Uterus (tissue), 4 donors: ENCODE measurements at regions of chr12 and their contacts with region 1.

Region 1: GRCh38 chr12:121668750-121669520 is 519 bp downstream of the MORN3 start:
- DNase-seq: no peak
- H3K4me3 ChIP-seq: no peak overlapping the region
- H3K27ac ChIP-seq: no peak overlapping the region
- H3K4me1 ChIP-seq: no peaks in the 10 kb centered on the region
- H3K27me3 ChIP-seq: no peaks in the 10 kb centered on the region
- CTCF ChIP-seq: peak; percentile 37 to 42 (median 40)
- POLR2A ChIP-seq: no peak

Region 2: DNA sequence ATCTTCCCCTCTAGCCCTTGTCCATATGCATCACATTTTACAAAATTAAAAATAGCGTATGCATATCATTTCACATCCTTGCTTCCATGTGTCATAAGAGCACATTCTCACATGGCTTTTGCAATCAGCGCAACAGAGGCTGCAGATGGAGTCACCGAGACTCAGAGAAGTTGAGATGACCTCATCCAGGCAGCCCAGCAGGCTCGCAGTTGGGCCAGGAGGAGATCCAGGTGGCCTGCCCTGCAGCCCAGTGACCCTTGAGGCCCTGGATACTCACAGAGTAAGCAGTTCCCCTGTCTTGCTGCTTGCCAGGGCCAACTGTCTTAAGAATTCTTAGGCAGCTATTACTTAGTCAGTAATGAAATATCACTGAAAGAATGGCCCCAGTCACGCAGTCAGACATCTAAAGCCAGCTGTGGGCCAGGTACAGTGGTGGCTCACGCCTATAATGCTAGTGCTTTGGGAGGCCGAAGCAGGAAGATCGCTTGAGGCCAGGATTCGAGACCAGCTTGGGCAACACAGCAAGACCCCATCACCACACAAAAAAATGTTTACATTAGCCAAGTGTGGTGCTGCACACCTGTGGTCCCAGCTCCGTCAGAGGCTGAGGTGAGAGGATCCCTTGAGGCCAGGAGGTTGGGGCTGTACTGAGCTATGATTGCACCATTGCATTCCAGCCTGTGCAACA is 381.5 kb before region 1 on chr12:
- intact Hi-C with region 1: no loop called
- DNase-seq: no peak
- H3K4me3 ChIP-seq: no peak overlapping the region
- H3K27ac ChIP-seq: no peak overlapping the region
- H3K4me1 ChIP-seq: peaks cover 0 to 8% of the 10 kb centered on the region in 2 donors
- H3K27me3 ChIP-seq: no peaks in the 10 kb centered on the region
- CTCF ChIP-seq: no peak
- POLR2A ChIP-seq: no peak

Region 3: GRCh38 chr12:121499929-121500793 is 168.8 kb before region 1 on chr12:
- intact Hi-C with region 1: loop called (anchors 10 kb)
- DNase-seq: peak; percentile 79 to 80
- H3K4me3 ChIP-seq: peak overlapping the region; percentile 4 to 5
- H3K27ac ChIP-seq: peak overlapping the region; percentile 55 to 61
- H3K4me1 ChIP-seq: peaks cover 0 to 5% of the 10 kb centered on the region in 2 donors
- H3K27me3 ChIP-seq: no peaks in the 10 kb centered on the region
- CTCF ChIP-seq: peak; percentile 79 to 97 (median 90)
- POLR2A ChIP-seq: no peak

Region 4: DNA sequence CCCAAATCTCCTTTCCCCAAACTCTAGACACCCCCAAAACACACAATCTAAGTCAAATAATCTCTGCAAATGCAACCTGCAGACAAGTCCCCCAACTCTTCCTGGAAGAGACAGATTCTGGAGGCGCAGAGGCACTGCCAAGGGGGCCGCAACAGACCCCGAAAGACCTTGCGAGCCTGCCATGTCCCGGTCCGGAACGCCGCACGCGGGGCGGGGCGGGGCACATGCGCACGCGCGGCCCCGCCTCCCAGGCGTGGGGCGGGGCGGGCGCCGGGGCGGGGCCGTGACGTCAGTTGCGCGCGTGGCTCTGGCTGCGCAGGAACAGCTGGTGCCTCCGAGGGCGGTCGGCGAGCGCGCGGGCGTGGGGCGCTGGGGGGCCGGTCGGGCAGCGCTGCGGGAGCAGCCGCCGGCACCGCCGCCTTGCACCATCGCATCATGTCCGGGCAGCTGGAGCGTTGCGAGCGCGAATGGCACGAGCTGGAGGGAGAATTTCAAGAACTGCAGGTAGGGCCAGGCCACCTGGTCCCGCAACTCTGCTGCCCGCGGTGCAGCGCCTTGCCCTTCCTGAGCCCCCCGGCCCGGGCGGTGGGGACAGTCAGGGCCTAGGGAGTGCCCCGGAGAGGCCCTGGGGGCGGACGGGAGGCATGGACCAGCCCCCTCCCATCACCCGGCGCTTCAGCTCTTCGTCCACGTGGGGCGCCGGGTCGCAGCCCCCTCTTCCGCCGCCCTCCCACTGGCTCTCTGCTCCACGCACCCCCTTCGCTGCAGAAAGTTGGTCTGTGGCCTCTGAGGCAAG is 43.7 kb after region 1 on chr12 and contains the start of gene TMEM120B:
- intact Hi-C with region 1: no loop called
- DNase-seq: peak; percentile 80 to 86
- H3K4me3 ChIP-seq: peak within 1 kb of the TSS; percentile 63 to 92
- H3K27ac ChIP-seq: peak within 1 kb of the TSS; percentile 83 to 90
- H3K4me1 ChIP-seq: peaks cover 0 to 4% of the 10 kb centered on the region in 2 donors
- H3K27me3 ChIP-seq: no peaks in the 10 kb centered on the region
- CTCF ChIP-seq: peak in 1 of 4 experiments; percentile 11
- POLR2A ChIP-seq: peak; percentile 64 to 90
- total RNA-seq, gene TMEM120B: 1.0 to 35.2 (median 19.6) TPM